GM12878 (cell line): ENCODE measurements at regions of chr18 and their contacts with region 1.

Region 1: DNA sequence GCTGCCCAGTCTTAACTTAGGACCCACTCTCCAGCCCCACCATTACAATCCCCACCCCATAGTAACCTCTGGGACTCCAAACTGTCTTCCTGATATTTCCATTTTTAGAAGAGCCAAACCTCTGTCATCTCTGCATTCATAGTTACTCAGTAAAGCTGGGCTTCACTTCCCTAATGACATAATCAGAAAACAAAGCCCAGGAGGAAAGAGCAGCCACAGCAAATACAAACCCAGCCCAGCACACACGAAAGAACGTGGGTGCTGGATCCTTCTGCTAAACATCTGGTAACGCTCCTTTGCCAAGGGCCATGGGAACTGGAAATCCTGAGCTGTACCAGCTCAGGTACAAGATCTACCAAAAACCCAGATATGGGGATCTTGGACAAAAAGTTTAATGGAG is 36.8 kb upstream of the RIOK3 start:
- DNase-seq: no peak
- ATAC-seq: peak; percentile 29; the same call in 2 of the 3 replicates
- H3K4me3 ChIP-seq: no peak overlapping the region
- H3K27ac ChIP-seq: no peak overlapping the region
- H3K4me1 ChIP-seq: no peaks in the 10 kb centered on the region; the same call in 1 of the 2 replicates
- H3K27me3 ChIP-seq: no peaks in the 10 kb centered on the region
- CTCF ChIP-seq: no peak
- EP300 ChIP-seq: no peak
- POLR2A ChIP-seq: no peak
- RAD21 ChIP-seq: no peak

Region 2: DNA sequence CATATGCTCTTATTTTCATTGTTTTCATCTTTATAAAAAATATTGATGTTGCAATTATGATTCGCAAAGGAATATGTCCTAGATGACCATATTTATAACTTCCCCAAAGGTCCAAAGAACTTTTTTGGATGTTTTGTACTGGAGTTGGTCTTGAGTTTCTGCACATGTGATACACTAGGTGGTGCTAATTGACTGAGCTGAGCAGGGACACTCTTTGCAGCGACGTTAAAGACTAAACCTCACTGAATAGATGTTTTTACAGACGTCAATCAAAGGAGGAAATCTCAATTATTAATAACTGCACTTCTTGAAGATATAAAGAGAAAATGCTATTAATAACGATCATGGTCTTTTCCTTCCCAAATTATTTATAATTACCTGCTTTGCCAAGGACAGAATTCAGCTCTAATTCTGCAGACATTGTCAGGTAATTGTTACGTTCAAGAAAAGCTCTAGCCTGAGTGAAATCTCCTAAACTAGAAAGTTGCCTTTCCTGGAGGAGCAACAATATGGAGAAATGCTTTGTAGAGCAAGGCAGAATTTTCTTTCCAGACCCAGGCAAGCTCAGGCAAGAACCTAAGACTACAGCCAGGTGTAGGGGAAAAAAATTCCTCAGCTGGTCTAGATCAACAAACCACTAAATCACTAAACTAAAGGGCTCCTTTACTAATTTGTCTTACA is 602.5 kb before region 1 on chr18:
- CTCF ChIA-PET with region 1: interaction called, 17 read pairs
- POLR2A ChIA-PET with region 1: no interaction called
- RAD21 ChIA-PET with region 1: interaction called, 5 read pairs
- SMC1A ChIA-PET with region 1: interaction called, 14 read pairs
- in situ Hi-C with region 1: loop called (anchors 10 kb)
- intact Hi-C with region 1: no loop called
- DNase-seq: no peak
- ATAC-seq: peak; percentile 78
- H3K4me3 ChIP-seq: no peak overlapping the region
- H3K27ac ChIP-seq: no peak overlapping the region
- H3K4me1 ChIP-seq: no peaks in the 10 kb centered on the region
- H3K27me3 ChIP-seq: no peaks in the 10 kb centered on the region
- CTCF ChIP-seq: peak; percentile 48 to 79 (median 65); a peak in 5 of 6 replicates
- EP300 ChIP-seq: no peak
- POLR2A ChIP-seq: no peak
- RAD21 ChIP-seq: peak; percentile 98

Region 3: GRCh38 chr18:22983175-22983574 is 433.1 kb before region 1 on chr18:
- CTCF ChIA-PET with region 1: interaction called, 12 read pairs
- POLR2A ChIA-PET with region 1: no interaction called
- RAD21 ChIA-PET with region 1: interaction called, 5 read pairs
- SMC1A ChIA-PET with region 1: interaction called, 3 read pairs
- in situ Hi-C with region 1: no loop called
- intact Hi-C with region 1: loop called (anchors 5 kb)
- DNase-seq: no peak
- ATAC-seq: peak; percentile 50
- H3K4me3 ChIP-seq: no peak overlapping the region
- H3K27ac ChIP-seq: no peak overlapping the region
- H3K4me1 ChIP-seq: peaks cover 7% of the 10 kb centered on the region
- H3K27me3 ChIP-seq: no peaks in the 10 kb centered on the region
- CTCF ChIP-seq: peak; percentile 27 to 57 (median 34); a peak in 4 of 6 replicates
- EP300 ChIP-seq: no peak
- POLR2A ChIP-seq: no peak
- RAD21 ChIP-seq: peak; percentile 73

Region 4: GRCh38 chr18:23131693-23132319 is 284.5 kb before region 1 on chr18:
- CTCF ChIA-PET with region 1: interaction called, 42 read pairs
- POLR2A ChIA-PET with region 1: no interaction called
- RAD21 ChIA-PET with region 1: interaction called, 61 read pairs
- SMC1A ChIA-PET with region 1: interaction called, 22 read pairs
- in situ Hi-C with region 1: loop called (anchors 5 kb)
- intact Hi-C with region 1: loop called (anchors 1 kb)
- DNase-seq: peak; percentile 58
- ATAC-seq: peak; percentile 44
- H3K4me3 ChIP-seq: no peak overlapping the region
- H3K27ac ChIP-seq: no peak overlapping the region
- H3K4me1 ChIP-seq: peaks cover 18% of the 10 kb centered on the region
- H3K27me3 ChIP-seq: no peaks in the 10 kb centered on the region
- CTCF ChIP-seq: peak; percentile 64 to 82 (median 67)
- EP300 ChIP-seq: no peak
- POLR2A ChIP-seq: no peak
- RAD21 ChIP-seq: peak; percentile 89

Region 5: GRCh38 chr18:23356915-23357601 is 59.2 kb before region 1 on chr18:
- CTCF ChIA-PET with region 1: interaction called, 9 read pairs
- POLR2A ChIA-PET with region 1: no interaction called
- RAD21 ChIA-PET with region 1: interaction called, 6 read pairs
- SMC1A ChIA-PET with region 1: interaction called, 25 read pairs
- in situ Hi-C with region 1: no loop called
- intact Hi-C with region 1: no loop called
- DNase-seq: no peak
- ATAC-seq: no peak
- H3K4me3 ChIP-seq: no peak overlapping the region
- H3K27ac ChIP-seq: no peak overlapping the region
- H3K4me1 ChIP-seq: peaks cover 21% of the 10 kb centered on the region
- H3K27me3 ChIP-seq: no peaks in the 10 kb centered on the region
- CTCF ChIP-seq: no peak
- EP300 ChIP-seq: no peak
- POLR2A ChIP-seq: no peak
- RAD21 ChIP-seq: no peak

Region 6: DNA sequence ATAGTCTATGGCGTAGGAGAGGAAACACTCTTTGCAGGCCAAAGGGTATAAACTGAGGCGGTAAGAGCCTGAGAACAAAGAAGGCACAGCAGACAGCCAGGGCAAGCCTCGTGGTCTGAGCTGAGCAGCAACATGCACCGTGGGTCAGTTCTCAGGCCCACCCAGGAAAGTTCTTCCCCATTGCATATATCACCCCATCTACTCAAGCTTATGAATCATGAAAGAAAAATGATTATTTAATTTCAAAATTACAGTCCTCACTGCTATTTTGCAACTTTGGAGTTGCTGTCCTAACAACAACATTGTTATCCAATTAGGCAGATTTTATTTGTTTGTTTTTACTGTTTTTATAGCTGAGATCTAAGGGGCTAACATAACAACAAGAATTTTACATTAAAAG is 17.9 kb before region 1 on chr18:
- CTCF ChIA-PET with region 1: interaction called, 12 read pairs
- POLR2A ChIA-PET with region 1: interaction called, 4 read pairs
- RAD21 ChIA-PET with region 1: interaction called, 4 read pairs
- SMC1A ChIA-PET with region 1: interaction called, 8 read pairs
- in situ Hi-C with region 1: no loop called
- intact Hi-C with region 1: no loop called
- DNase-seq: no peak
- ATAC-seq: no peak
- H3K4me3 ChIP-seq: no peak overlapping the region
- H3K27ac ChIP-seq: no peak overlapping the region
- H3K4me1 ChIP-seq: no peaks in the 10 kb centered on the region
- H3K27me3 ChIP-seq: no peaks in the 10 kb centered on the region
- CTCF ChIP-seq: no peak
- EP300 ChIP-seq: no peak
- POLR2A ChIP-seq: no peak
- RAD21 ChIP-seq: no peak